PC-9 (cell line): ENCODE measurements at regions of chr18 and their contacts with region 1.

Region 1: DNA sequence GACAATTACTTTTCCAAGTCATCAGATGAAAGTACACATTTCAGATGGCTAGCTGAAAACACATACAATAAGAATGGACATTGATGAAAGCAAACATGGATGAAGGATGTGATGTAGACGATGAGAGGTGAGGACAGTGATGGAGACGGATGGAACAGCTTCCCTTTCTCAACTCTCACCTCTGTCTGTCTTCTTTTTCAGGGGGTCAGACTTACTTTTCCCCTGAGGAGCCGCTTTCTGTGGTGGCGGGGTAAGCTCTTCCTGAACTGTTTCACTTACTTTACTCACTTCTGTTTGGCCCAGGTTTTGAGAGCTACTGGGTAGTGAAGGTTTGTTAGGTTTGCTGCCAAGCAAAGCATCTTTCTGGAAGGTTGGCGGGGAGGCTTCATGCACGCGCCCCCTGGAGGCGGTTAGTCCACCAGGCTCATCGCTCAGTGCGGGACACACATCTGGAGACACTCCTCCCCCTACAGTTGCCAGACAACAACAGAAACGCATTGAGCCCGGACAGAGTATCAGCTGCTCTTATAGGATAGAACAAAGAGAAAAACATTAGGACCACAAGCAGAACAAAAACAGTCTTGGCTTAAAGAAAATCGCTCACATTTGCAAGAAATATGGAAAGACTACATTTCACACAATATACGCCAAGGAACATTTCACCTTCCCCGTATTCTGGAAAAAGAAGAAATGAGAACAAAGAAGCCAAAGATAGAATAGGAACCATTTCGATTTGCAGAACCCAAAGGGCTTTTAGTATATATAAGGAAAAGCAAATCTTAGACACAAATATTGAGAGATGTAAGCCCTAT is 90.5 kb downstream of the MYOM1 start:
- DNase-seq: peak; percentile 38 to 40
- H3K4me3 ChIP-seq: no peak overlapping the region
- H3K27ac ChIP-seq: no peak overlapping the region
- H3K4me1 ChIP-seq: no peaks in the 10 kb centered on the region
- H3K27me3 ChIP-seq: no peaks in the 10 kb centered on the region
- CTCF ChIP-seq: peak; percentile 63

Region 2: DNA sequence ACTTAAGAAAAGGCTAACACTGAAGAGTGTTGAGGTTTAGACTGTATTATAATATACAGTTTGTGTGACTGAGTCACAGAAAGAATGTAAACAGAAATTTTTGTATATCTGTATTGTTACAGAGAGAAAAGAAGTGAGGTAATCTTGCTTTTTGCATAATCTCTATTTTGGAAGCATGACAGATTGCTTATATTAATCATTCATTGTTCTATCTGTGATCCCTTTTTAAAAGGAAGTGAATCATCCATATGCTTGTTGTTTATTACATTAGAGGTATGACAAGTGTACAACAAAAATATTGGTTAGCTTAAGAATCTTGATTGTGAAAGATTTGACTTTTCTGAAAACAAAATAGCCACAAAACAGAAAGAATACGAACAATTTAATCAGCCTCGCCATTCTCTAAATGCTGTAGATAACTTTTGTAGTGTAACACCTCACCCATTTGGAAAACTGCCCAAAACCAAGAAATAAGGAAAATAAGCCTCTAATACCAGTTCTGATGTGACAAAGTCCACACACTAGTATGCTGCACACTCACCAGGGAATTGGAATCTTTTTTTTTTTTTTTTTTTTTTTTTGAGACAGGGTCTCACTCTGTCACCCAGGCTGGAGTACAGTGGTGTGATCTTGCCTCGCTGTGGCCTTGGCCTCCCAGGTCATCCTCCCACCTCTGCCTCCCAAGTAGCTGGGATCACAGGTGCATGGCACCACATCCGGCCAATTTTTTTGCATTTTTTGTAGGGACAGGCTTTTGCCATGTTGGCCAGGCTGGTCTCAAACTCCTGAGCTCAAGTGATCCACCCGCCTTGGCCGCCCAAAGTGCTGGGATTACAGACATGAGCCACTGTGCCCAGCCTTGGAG is 24.8 kb before region 1 on chr18:
- CTCF ChIA-PET with region 1: interaction called, 10 read pairs
- POLR2A ChIA-PET with region 1: no interaction called
- intact Hi-C with region 1: no loop called
- DNase-seq: peak in 1 of 2 experiments; percentile 92
- H3K4me3 ChIP-seq: no peak overlapping the region
- H3K27ac ChIP-seq: peak overlapping the region; percentile 64
- H3K4me1 ChIP-seq: peaks cover 41% of the 10 kb centered on the region
- H3K27me3 ChIP-seq: no peaks in the 10 kb centered on the region
- CTCF ChIP-seq: no peak